Heart left ventricle (tissue), 16 donors: ENCODE measurements at regions of chr10 and their contacts with region 1.

Region 1: DNA sequence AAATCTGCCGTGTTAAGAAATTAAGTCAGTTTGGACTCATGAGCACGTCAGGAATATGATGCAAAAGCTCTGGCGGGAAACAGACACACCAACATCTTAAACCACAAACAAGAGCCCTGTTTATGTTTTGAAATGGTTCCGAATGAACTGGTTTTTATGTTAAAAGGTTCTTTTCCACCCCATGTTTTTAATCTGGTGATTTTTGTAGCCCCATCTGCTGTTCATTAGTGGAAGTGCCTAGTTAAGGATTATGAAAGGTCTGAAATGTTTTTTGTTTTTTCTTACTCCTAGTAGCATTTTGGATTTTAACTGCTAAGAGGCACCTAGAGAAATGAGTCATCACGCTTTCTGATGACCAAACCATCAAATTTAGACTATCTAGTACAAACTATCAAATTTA is 404.1 kb upstream of the MKI67 start:
- DNase-seq: no peak
- ATAC-seq: no peak
- H3K4me3 ChIP-seq: no peak overlapping the region
- H3K27ac ChIP-seq: no peak overlapping the region
- H3K4me1 ChIP-seq: no peaks in the 10 kb centered on the region
- H3K27me3 ChIP-seq: peaks cover 0 to 35% (median 4%) of the 10 kb centered on the region in 9 donors
- CTCF ChIP-seq: peak; percentile 31 to 66 (median 51)
- POLR2A ChIP-seq: no peak

Region 2: DNA sequence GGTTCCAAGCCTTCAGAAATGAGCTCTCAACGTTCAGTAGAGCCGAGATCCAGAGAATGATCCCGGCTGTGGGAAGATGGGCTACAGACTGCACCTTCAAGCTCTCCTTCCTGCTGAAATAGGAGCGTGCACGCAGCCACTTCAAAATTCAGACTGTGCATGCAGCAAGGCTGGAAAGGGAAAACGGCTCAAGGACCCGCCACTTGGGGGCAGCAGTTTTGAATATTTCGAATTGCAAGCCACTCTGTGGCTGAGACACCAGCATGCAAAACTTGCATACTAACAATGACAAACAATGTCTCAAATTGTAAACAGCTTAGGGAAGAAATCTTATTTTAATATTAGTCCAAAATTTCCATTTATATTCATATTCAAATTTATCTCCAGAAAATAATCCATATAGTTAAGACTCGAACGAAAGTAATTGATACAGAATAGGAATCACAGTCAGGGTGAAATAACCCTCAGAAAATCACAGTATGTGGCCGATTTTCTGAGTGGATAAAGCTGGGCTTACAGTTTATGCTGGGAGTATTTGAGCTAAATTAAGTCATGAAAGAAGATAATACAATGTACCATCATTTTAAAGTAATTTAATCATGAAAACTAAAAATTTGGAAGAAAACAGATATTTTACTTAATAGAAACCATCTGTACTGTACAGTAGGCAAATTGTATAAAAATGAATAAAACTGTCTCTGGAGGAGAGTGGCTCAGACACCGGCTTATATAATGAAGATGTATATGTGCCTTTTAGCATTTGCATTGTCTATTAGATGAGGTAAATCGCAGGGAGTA is 266.2 kb before region 1 on chr10:
- intact Hi-C with region 1: loop called in 7 of 10 experiments (anchors 2 to 5 kb)
- DNase-seq: peak; percentile 39 to 79 (median 44)
- ATAC-seq: peak in 3 of 4 donors; percentile 31 to 64 (median 60)
- H3K4me3 ChIP-seq: no peak overlapping the region
- H3K27ac ChIP-seq: no peak overlapping the region
- H3K4me1 ChIP-seq: no peaks in the 10 kb centered on the region
- H3K27me3 ChIP-seq: peaks cover 7 to 75% (median 31%) of the 10 kb centered on the region in 9 donors
- CTCF ChIP-seq: peak; percentile 44 to 76 (median 59)
- POLR2A ChIP-seq: no peak

Region 3: GRCh38 chr10:128274938-128275337 is 255.4 kb before region 1 on chr10:
- intact Hi-C with region 1: loop called in 1 of 10 experiments (anchors 10 kb)
- DNase-seq: peak in 1 of 5 donors; percentile 45
- ATAC-seq: no peak
- H3K4me3 ChIP-seq: no peak overlapping the region
- H3K27ac ChIP-seq: no peak overlapping the region
- H3K4me1 ChIP-seq: peaks cover 0 to 11% (median 0%) of the 10 kb centered on the region in 12 donors
- H3K27me3 ChIP-seq: peaks cover 0 to 86% (median 13%) of the 10 kb centered on the region in 9 donors
- CTCF ChIP-seq: peak in 1 of 12 donors; percentile 22
- POLR2A ChIP-seq: no peak

Region 4: GRCh38 chr10:128324077-128324827 is 206.0 kb before region 1 on chr10:
- intact Hi-C with region 1: loop called in 4 of 10 experiments (anchors 5 to 10 kb)
- DNase-seq: peak in 2 of 5 donors; percentile 37 to 62
- ATAC-seq: peak in 3 of 4 donors; percentile 68 to 86 (median 76)
- H3K4me3 ChIP-seq: no peak overlapping the region
- H3K27ac ChIP-seq: no peak overlapping the region
- H3K4me1 ChIP-seq: no peaks in the 10 kb centered on the region
- H3K27me3 ChIP-seq: peaks cover 0 to 31% (median 0%) of the 10 kb centered on the region in 9 donors
- CTCF ChIP-seq: peak in 10 of 12 donors; percentile 8 to 41 (median 27)
- POLR2A ChIP-seq: no peak